ENCODE measurements at regions of chr10 and their contacts with region 1.

Region 1: GRCh38 chr10:27658788-27659187 is 86.8 kb downstream of the MKX start:
- DNase-seq: no peak
- ATAC-seq: no peak

Region 2: GRCh38 chr10:27446091-27446918 is 212.5 kb before region 1 on chr10:
- intact Hi-C with region 1: loop called (anchors 10 kb)
- DNase-seq: no peak
- ATAC-seq: peak; percentile 43

Measured in left ventricle myocardium superior (tissue), 1 donor.